Testis (tissue), 5 donors: ENCODE measurements at regions of chr7 and their contacts with region 1.

Region 1: GRCh38 chr7:47945261-47946001 is 2.8 kb downstream of the PKD1L1 start:
- DNase-seq: peak; percentile 92
- H3K4me3 ChIP-seq: no peak overlapping the region
- H3K27ac ChIP-seq: no peak overlapping the region
- H3K4me1 ChIP-seq: peaks cover 15% of the 10 kb centered on the region
- H3K27me3 ChIP-seq: no peaks in the 10 kb centered on the region
- CTCF ChIP-seq: peak; percentile 76 to 82 (median 79)
- POLR2A ChIP-seq: no peak

Region 2: GRCh38 chr7:47914717-47915615 is 30.5 kb before region 1 on chr7:
- intact Hi-C with region 1: no loop called
- DNase-seq: no peak
- H3K4me3 ChIP-seq: no peak overlapping the region
- H3K27ac ChIP-seq: no peak overlapping the region
- H3K4me1 ChIP-seq: no peaks in the 10 kb centered on the region
- H3K27me3 ChIP-seq: no peaks in the 10 kb centered on the region
- CTCF ChIP-seq: no peak
- POLR2A ChIP-seq: no peak

Region 3: GRCh38 chr7:48109848-48110663 is 164.6 kb after region 1 on chr7:
- intact Hi-C with region 1: loop called (anchors 10 kb)
- DNase-seq: peak; percentile 90
- H3K4me3 ChIP-seq: no peak overlapping the region
- H3K27ac ChIP-seq: no peak overlapping the region
- H3K4me1 ChIP-seq: peaks cover 4% of the 10 kb centered on the region
- H3K27me3 ChIP-seq: no peaks in the 10 kb centered on the region
- CTCF ChIP-seq: peak; percentile 95 to 99 (median 97)
- POLR2A ChIP-seq: no peak